ENCODE measurements at regions of chr18 and their contacts with region 1.

Region 1: DNA sequence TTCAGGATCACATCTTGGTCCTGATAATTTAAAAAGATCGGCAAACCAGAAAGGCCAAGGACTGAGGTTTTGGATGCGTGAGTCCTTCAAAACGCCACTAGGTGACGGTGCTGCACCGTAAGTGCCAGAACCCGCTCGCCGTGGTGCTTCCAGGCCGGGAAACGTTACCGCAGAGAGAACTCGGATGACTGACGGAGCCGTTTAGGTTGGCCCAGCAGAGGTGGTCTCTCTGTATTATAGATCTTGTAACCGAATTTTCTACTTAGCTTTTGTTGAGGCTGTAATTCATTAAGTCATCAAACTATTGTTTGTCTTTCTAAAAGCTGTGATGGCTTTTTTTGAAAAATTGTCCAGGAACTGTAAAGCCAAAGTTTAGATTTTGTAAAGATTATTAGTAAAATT is 39.8 kb upstream of the ADCYAP1 start:
- DNase-seq: peak; percentile 73 to 79 (median 76)
- ATAC-seq: peak; percentile 91
- H3K4me3 ChIP-seq: no peak overlapping the region
- H3K27ac ChIP-seq: no peak overlapping the region
- H3K4me1 ChIP-seq: no peaks in the 10 kb centered on the region
- H3K27me3 ChIP-seq: no peaks in the 10 kb centered on the region
- CTCF ChIP-seq: peak; percentile 93 to 99 (median 97)
- POLR2A ChIP-seq: no peak

Region 2: DNA sequence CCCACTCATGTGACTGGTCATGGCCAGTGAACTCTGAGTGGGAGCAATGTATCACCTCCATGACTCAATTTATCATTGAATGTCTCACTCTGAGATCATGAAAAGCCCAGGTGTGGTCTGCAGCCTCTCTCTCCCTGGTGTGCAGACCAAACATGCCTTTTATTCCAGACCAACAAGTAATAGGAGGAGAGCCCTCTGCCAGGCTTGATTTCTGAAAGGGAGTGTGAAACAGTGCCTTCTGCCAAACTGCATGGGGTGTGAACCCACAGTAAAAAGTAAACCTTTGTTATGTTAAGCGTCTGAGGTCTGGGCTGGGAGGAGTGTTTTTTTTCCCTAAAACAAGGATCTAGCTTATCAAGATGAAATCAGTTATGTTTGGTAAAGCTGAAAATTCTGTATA is 641.0 kb after region 1 on chr18:
- intact Hi-C with region 1: loop called (anchors 10 kb)
- DNase-seq: no peak
- ATAC-seq: no peak
- H3K4me3 ChIP-seq: no peak overlapping the region
- H3K27ac ChIP-seq: no peak overlapping the region
- H3K4me1 ChIP-seq: no peaks in the 10 kb centered on the region
- H3K27me3 ChIP-seq: no peaks in the 10 kb centered on the region
- CTCF ChIP-seq: no peak
- POLR2A ChIP-seq: no peak

Region 3: GRCh38 chr18:2223849-2224248 is 1359.0 kb after region 1 on chr18:
- intact Hi-C with region 1: loop called (anchors 10 kb)
- DNase-seq: peak in 3 of 4 donors; percentile 27 to 46 (median 30)
- ATAC-seq: peak; percentile 65
- H3K4me3 ChIP-seq: no peak overlapping the region
- H3K27ac ChIP-seq: no peak overlapping the region
- H3K4me1 ChIP-seq: peaks cover 10% of the 10 kb centered on the region
- H3K27me3 ChIP-seq: no peaks in the 10 kb centered on the region
- CTCF ChIP-seq: peak; percentile 28 to 64 (median 51)
- POLR2A ChIP-seq: no peak

Region 4: DNA sequence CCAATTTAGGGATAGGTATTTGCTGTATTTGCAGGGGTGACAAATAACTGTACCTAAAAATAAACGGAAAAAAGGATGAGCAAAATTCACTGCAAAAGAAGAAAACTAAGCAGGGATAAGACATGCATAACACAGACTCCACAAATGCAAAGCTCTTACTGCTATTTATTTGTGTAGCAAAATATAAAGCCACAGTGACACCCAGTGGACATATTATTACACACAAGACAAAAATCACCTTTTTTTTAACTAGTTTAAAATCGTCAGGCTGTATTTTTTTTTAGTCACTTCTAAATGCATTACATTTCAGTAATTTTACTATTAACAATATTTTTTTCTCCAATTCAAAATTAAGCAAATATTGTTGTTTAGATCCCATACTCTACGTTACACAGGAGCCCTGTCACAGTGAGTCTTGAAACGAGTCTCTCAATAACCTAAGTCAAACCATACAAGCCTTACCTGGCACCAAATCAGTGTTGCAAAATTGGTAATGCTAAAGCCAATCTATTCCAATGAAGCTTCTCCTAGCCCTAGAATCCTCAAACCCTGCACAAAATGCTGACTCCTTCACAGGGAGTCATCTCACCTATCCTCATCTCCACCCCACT is 1682.7 kb after region 1 on chr18:
- intact Hi-C with region 1: loop called (anchors 10 kb)
- DNase-seq: no peak
- ATAC-seq: peak; percentile 47
- H3K4me3 ChIP-seq: no peak overlapping the region
- H3K27ac ChIP-seq: no peak overlapping the region
- H3K4me1 ChIP-seq: no peaks in the 10 kb centered on the region
- H3K27me3 ChIP-seq: no peaks in the 10 kb centered on the region
- CTCF ChIP-seq: peak; percentile 22 to 68 (median 56)
- POLR2A ChIP-seq: no peak

Measured in body of pancreas (tissue), 4 donors.